HAP-1 (cell line): ENCODE measurements at regions of chr3 and their contacts with region 1.

Region 1: GRCh38 chr3:124761250-124761796 is 31.1 kb downstream of the UMPS start:
- DNase-seq: peak; percentile 65 to 89
- H3K4me3 ChIP-seq: no peak overlapping the region
- H3K4me1 ChIP-seq: peaks cover 7% of the 10 kb centered on the region
- H3K27me3 ChIP-seq: no peaks in the 10 kb centered on the region

Region 2: GRCh38 chr3:124905849-124906248 is 144.5 kb after region 1 on chr3:
- in situ Hi-C with region 1: loop called (anchors 5 kb)
- DNase-seq: no peak
- H3K4me3 ChIP-seq: no peak overlapping the region
- H3K4me1 ChIP-seq: no peaks in the 10 kb centered on the region
- H3K27me3 ChIP-seq: peaks cover 8% of the 10 kb centered on the region